Right ventricle myocardium superior (tissue), 1 donor: ENCODE measurements at regions of chr9 and their contacts with region 1.

Region 1: GRCh38 chr9:32526041-32526706 is at the start of gene RIGI:
- DNase-seq: peak; percentile 97
- ATAC-seq: peak; percentile 96
- total RNA-seq, gene RIGI: 3.1 TPM

Region 2: GRCh38 chr9:32423371-32423770 is 102.8 kb before region 1 on chr9:
- intact Hi-C with region 1: no loop called
- DNase-seq: no peak
- ATAC-seq: no peak

Region 3: DNA sequence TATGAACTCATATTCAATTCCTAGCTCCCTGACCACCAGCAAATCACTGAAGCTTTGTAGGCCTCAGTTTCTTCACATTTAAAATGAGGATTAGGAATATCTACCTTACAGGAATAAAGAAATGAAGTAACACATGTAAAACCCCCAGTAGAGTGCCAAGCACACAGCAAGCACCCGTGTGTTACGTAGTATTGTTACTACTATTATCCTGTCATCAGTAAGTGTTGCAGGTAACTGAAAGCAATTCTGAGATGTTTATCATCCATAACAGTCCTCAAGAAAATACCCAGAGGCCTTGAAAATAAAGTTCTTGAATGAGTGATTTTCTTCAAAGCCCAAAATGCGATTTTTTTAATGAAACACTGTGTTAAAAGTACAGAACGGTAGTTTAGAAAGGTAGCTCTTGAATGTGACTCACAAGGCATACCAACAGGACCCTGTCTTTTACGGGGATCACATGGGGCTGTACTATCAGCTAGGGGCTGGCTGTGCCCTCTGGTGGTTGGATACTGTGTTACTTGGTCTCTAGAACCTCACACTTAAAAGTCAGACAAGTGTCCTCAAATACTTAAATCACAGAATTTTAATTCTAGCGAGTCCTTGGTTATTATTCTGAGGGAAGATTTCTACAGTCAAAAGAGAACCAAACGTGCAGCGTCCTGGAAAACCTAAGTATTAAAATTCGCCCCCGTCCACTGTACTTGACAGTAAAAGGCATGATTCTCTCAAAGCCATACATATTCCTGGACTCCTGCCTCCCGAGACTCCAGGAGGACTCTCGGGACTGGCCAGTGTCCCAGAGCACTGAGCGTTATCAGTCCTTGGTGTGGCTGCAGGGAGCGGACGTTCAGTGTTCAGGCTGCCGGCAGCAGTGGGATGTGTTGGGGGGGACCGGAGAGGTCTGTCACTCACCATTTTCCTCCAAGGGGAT is 46.1 kb after region 1 on chr9:
- intact Hi-C with region 1: loop called (anchors 10 kb)
- DNase-seq: peak; percentile 64
- ATAC-seq: peak; percentile 91

Region 4: DNA sequence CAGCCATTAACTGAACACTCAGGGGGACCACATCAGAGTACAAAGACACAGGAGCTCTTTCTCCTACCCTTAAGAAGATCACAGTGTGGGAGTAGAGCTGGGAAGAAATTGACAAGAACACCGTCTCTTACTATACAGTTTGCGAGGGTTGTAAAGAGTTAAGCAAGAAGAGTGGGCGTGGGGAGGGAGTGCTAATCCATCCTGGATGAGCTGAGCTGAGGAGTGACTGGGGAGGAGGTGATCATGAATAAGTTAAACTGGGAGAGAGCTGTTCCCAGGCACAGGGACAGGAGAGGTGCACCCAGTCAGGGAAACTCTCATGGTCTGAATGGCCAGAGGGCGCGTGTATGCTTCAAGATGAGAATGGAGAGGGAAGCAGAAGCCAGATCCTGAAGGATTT is 92.1 kb after region 1 on chr9:
- intact Hi-C with region 1: no loop called
- DNase-seq: no peak
- ATAC-seq: no peak